Endothelial cell of umbilical vein (primary cell): ENCODE measurements at regions of chr12 and their contacts with region 1.

Region 1: DNA sequence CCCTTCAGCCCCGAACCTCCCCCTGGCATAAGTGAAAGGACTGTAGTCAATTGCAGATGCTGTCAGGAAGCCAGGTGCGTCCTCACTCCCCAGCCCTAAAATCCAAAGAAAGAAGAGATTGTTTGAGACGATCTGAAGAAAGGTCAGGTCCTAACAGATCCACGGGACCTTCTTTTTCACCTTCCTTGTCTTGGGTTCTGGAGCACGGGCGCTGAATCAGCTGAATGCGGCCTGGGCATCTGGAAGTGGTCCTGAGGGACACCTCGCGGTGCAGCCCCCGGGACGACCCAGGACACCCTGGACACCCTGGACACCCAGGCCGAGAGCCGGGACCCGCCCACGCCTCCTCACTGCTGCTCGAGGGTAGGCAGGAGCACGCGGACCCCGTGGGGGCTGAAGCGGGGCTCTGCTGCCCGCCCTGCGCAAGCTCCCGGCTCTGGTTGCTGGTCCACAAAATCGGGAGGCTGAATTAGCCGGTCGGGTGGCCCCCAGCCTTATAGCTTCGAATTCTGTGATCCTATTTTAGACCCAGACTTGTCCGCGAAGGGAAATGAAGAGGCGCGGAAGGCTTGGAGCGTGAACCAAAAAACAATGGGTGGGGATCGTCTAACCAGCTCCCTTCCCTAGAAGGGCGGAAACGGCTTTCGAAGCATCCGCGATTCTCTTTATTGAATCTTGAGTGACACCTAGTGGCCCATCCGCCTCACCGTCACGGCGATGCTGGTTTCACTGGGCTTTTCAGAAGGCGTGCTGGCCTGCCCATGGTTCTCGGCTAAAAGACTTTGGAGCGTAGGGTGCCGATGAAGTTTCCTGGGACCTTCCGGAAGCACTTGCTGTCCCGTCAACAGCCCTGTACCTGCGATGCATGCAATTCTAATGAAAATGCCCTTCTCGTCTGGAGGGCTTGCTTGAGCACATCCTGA is 46.4 kb upstream of the PLXNC1 start:
- DNase-seq: peak; percentile 79
- H3K4me3 ChIP-seq: peak overlapping the region; percentile 33 to 58 (median 52)
- H3K27ac ChIP-seq: no peak overlapping the region
- H3K4me1 ChIP-seq: peaks cover 22% of the 10 kb centered on the region
- H3K27me3 ChIP-seq: peaks cover 6 to 13% of the 10 kb centered on the region in 2 experiments
- CTCF ChIP-seq: peak; percentile 80 to 86
- POLR2A ChIP-seq: no peak

Region 2: GRCh38 chr12:92784795-92785562 is 1317.0 kb before region 1 on chr12:
- CTCF ChIA-PET with region 1: interaction called, 17 read pairs
- POLR2A ChIA-PET with region 1: no interaction called
- dilution Hi-C with region 1: no loop called
- intact Hi-C with region 1: loop called (anchors 5 kb)
- DNase-seq: peak; percentile 90
- H3K4me3 ChIP-seq: no peak overlapping the region
- H3K27ac ChIP-seq: no peak overlapping the region
- H3K4me1 ChIP-seq: no peaks in the 10 kb centered on the region
- H3K27me3 ChIP-seq: no peaks in the 10 kb centered on the region
- CTCF ChIP-seq: peak; percentile 26 to 28
- POLR2A ChIP-seq: no peak

Region 3: DNA sequence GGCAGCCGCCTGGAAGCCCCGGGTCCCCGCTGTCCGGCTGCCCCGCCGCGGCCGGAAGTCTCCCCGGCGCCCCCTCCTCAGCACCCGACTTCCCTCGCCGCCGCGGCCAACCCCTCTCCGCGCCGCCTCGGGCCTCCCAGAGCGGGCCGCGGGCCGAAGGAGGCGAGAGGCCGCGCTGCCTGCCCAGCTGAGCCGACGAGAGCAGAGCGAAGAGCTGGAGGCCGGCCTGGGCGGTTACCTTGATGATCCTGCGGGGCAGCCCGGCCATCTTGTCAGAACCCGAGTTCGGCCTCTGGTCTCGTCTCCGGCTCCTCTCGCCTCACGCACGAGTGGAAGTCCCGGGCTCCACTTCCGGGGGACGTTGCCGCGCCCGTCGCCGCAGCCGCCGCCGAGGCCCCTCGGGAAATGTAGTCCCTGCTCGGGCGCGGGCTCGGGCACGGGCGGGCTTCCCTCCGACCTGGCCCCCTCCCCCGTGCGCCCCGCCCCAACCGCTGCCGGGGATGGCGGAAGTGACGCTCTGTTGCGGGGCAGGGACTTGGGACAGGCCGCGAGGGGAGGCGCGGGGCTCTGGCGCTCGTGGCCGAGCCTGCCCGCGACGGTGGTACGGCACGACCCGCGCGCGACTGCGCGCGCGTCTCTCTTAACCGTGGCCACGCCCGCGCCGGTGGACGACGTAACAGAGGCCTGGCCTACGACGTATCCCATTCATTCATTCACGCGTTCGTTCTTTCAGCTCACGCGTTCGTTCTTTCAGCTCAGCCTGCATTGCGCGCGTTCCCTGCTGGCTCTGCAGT is 660.2 kb before region 1 on chr12 and contains the start of gene UBE2N:
- CTCF ChIA-PET with region 1: interaction called, 4 read pairs
- POLR2A ChIA-PET with region 1: no interaction called
- dilution Hi-C with region 1: no loop called
- intact Hi-C with region 1: loop called (anchors 2 kb)
- DNase-seq: peak; percentile 96
- H3K4me3 ChIP-seq: peak within 1 kb of the TSS; percentile 73 to 89 (median 79)
- H3K27ac ChIP-seq: peak within 1 kb of the TSS; percentile 82
- H3K4me1 ChIP-seq: peaks cover 22% of the 10 kb centered on the region
- H3K27me3 ChIP-seq: no peaks in the 10 kb centered on the region
- CTCF ChIP-seq: no peak
- POLR2A ChIP-seq: peak; percentile 74
- total RNA-seq, gene UBE2N: 125 and 130 TPM in 2 replicates

Region 4: GRCh38 chr12:93526786-93527428 is 575.1 kb before region 1 on chr12:
- CTCF ChIA-PET with region 1: interaction called, 30 read pairs
- POLR2A ChIA-PET with region 1: no interaction called
- dilution Hi-C with region 1: no loop called
- intact Hi-C with region 1: loop called (anchors 5 kb)
- DNase-seq: peak; percentile 62
- H3K4me3 ChIP-seq: no peak overlapping the region
- H3K27ac ChIP-seq: no peak overlapping the region
- H3K4me1 ChIP-seq: peaks cover 5% of the 10 kb centered on the region
- H3K27me3 ChIP-seq: peaks cover 2% of the 10 kb centered on the region in 2 experiments
- CTCF ChIP-seq: no peak
- POLR2A ChIP-seq: no peak

Region 5: GRCh38 chr12:93677195-93678064 is 424.6 kb before region 1 on chr12 and contains the start of gene CRADD:
- CTCF ChIA-PET with region 1: interaction called, 12 read pairs
- POLR2A ChIA-PET with region 1: no interaction called
- dilution Hi-C with region 1: no loop called
- intact Hi-C with region 1: loop called (anchors 1 kb)
- DNase-seq: peak; percentile 97
- H3K4me3 ChIP-seq: peak within 1 kb of the TSS; percentile 43 to 68 (median 67)
- H3K27ac ChIP-seq: peak within 1 kb of the TSS; percentile 82
- H3K4me1 ChIP-seq: peaks cover 10% of the 10 kb centered on the region
- H3K27me3 ChIP-seq: peaks cover 1 to 7% of the 10 kb centered on the region in 2 experiments
- CTCF ChIP-seq: no peak
- POLR2A ChIP-seq: peak; percentile 73
- total RNA-seq, gene CRADD: 8.0 and 11.7 TPM in 2 replicates

Region 6: GRCh38 chr12:93785262-93786010 is 316.6 kb before region 1 on chr12:
- CTCF ChIA-PET with region 1: interaction called, 34 read pairs
- POLR2A ChIA-PET with region 1: no interaction called
- dilution Hi-C with region 1: no loop called
- intact Hi-C with region 1: no loop called
- DNase-seq: peak; percentile 90
- H3K4me3 ChIP-seq: no peak overlapping the region
- H3K27ac ChIP-seq: peak overlapping the region; percentile 99
- H3K4me1 ChIP-seq: peaks cover 44% of the 10 kb centered on the region
- H3K27me3 ChIP-seq: no peaks in the 10 kb centered on the region
- CTCF ChIP-seq: no peak
- POLR2A ChIP-seq: peak; percentile 36

Region 7: DNA sequence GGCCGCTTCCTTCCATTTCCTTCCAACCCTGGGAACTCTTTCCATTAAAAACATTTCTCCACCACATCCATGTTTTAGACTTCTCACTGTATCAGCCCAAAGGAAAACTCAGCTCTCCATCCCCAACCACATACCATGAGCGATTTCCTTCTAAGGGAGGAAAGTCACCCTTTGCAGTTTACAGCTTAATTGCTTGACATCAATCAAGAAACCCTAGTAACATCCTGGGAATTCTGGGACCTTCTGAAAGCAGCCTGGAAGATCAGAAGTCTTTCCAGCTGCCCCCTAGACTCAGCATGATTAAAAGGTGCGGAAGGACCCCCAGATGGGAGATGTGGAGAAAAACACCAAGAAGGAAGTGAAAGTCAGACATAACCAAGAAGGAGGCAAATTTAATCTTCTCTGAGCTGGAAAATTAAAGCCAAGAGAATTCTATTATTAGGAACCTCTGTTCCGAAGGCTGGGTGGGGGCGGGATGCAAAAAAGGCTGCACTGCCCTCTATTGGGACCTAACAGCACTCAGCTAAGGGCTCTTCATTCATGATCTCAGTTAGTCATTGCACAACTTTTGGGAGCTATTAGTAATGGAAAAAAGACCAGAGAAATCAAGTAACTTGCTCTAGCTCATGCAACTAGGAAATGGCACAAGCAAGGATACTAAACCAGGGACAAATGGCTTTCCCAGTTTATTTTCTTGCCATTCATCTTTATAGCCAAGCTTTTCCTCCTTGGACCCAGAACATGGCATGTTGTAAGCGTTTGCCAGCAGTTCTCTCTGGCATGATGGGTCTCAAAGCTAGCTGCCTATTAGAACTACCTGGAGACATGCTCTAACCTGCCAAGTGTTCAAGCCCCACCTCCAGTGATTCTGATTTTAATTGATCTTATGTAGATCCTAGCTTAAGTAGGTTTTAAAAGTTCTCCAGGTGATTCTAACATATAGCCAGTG is 26.7 kb before region 1 on chr12:
- CTCF ChIA-PET with region 1: interaction called, 76 read pairs
- POLR2A ChIA-PET with region 1: no interaction called
- dilution Hi-C with region 1: no loop called
- intact Hi-C with region 1: no loop called
- DNase-seq: peak; percentile 28
- H3K4me3 ChIP-seq: no peak overlapping the region
- H3K27ac ChIP-seq: no peak overlapping the region
- H3K4me1 ChIP-seq: no peaks in the 10 kb centered on the region
- H3K27me3 ChIP-seq: peaks cover 8 to 9% of the 10 kb centered on the region in 2 experiments
- CTCF ChIP-seq: peak; percentile 43 to 46
- POLR2A ChIP-seq: no peak